H1 (cell line): ENCODE measurements at regions of chr19 and their contacts with region 1.

Region 1: DNA sequence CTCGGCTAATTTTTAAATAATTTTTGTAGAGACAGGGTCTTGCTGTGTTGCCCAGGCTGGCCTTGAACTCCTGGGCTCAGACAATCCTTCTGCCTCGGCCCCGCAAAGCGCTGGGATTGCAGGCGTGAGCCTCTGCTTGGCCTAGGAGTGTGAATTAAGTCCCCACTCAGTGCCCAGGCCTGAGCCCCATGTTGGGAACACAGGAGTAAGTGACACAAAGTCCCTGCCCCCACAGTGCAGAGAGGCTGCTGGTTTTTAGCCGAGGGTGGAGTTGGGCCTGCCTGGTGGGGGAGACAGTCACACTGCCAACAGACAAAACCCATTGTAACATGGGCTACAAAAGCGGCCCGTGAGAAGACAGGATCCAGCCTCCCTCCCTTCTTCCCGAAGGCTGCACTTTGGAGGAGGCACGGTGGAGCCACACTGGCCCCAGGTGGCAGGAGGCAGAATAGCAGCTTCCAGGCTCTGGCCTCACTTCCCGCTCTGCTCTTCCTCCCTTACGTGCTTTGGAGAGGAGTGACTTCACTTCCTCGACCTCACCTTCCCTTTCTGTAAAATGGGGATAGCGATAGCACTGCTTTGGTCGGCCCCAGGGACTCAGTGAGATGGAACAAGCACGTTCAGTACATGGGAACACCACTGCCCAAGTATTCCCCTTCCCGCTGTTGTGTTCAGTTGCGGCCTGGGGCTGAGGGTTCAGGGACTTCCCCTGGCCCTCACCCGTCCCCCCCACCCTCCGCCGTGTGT is 15.2 kb upstream of the EHD2 start:
- DNase-seq: peak; percentile 84 to 88
- H3K4me3 ChIP-seq: no peak overlapping the region
- H3K27ac ChIP-seq: no peak overlapping the region
- H3K4me1 ChIP-seq: peaks cover 0 to 3% (median 0%) of the 10 kb centered on the region in 4 experiments; a peak in 2 of 7 replicates
- H3K27me3 ChIP-seq: no peaks in the 10 kb centered on the region
- CTCF ChIP-seq: peak; percentile 95 to 100 (median 99)
- EP300 ChIP-seq: no peak
- POLR2A ChIP-seq: no peak
- RAD21 ChIP-seq: peak; percentile 99 to 100

Region 2: GRCh38 chr19:47428177-47428894 is 269.7 kb before region 1 on chr19:
- CTCF ChIA-PET with region 1: interaction called, 436 read pairs
- POLR2A ChIA-PET with region 1: interaction called, 3 read pairs
- DNase-seq: peak; percentile 96 to 100
- H3K4me3 ChIP-seq: peak overlapping the region; percentile 31 to 61 (median 42); a peak in 7 of 8 replicates
- H3K27ac ChIP-seq: no peak overlapping the region
- H3K4me1 ChIP-seq: peaks cover 0 to 23% (median 12%) of the 10 kb centered on the region in 4 experiments; a peak in 5 of 7 replicates
- H3K27me3 ChIP-seq: peaks cover 5 to 33% (median 29%) of the 10 kb centered on the region in 4 experiments
- CTCF ChIP-seq: no peak
- EP300 ChIP-seq: no peak
- POLR2A ChIP-seq: no peak
- RAD21 ChIP-seq: no peak

Region 3: DNA sequence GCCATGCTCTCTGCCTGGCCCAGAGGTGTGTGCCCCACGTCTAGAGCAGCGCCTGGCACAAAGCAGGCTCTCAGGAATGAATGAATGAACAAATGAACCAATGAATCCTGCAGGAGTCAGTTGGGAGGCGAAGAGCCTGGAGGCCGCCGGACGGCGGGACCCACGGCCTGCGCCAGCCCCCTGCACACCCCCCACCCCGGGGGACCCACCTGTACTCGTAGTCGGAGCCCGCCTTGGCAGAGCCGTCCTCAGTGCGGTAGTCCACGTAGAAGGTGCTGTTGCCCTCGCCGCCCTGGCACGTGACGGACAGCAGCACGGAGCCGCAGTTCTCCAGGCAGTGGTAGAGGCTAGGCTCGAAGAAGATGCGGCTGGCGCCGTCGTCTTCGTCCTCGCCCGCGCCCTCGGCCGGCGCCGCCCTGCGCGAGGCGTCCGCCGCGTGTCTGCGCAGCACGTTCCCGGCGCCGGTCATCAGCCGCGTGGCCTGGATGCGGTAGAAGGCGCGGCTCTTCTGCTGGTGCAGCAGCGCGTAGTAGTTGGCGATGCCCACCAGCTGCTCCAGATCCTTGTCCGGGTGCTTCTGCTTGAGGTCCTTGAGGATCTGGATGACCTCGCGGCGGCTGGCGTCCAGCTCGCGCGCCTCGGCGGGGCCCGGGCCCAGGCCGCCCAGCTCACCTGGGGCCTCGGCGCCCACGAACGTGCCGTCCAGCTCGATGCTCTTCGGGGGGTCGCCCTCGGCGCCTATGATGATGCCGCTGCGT is 241.1 kb before region 1 on chr19:
- CTCF ChIA-PET with region 1: interaction called, 10 read pairs
- POLR2A ChIA-PET with region 1: no interaction called
- DNase-seq: no peak
- H3K4me3 ChIP-seq: peak overlapping the region in 1 of 4 experiments; percentile 47; a peak in 2 of 8 replicates
- H3K27ac ChIP-seq: no peak overlapping the region
- H3K4me1 ChIP-seq: peaks cover 0 to 4% (median 0%) of the 10 kb centered on the region in 4 experiments; a peak in 2 of 7 replicates
- H3K27me3 ChIP-seq: peaks cover 0 to 17% (median 5%) of the 10 kb centered on the region in 4 experiments; a peak in 4 of 7 replicates
- CTCF ChIP-seq: no peak
- EP300 ChIP-seq: no peak
- POLR2A ChIP-seq: no peak
- RAD21 ChIP-seq: no peak

Region 4: DNA sequence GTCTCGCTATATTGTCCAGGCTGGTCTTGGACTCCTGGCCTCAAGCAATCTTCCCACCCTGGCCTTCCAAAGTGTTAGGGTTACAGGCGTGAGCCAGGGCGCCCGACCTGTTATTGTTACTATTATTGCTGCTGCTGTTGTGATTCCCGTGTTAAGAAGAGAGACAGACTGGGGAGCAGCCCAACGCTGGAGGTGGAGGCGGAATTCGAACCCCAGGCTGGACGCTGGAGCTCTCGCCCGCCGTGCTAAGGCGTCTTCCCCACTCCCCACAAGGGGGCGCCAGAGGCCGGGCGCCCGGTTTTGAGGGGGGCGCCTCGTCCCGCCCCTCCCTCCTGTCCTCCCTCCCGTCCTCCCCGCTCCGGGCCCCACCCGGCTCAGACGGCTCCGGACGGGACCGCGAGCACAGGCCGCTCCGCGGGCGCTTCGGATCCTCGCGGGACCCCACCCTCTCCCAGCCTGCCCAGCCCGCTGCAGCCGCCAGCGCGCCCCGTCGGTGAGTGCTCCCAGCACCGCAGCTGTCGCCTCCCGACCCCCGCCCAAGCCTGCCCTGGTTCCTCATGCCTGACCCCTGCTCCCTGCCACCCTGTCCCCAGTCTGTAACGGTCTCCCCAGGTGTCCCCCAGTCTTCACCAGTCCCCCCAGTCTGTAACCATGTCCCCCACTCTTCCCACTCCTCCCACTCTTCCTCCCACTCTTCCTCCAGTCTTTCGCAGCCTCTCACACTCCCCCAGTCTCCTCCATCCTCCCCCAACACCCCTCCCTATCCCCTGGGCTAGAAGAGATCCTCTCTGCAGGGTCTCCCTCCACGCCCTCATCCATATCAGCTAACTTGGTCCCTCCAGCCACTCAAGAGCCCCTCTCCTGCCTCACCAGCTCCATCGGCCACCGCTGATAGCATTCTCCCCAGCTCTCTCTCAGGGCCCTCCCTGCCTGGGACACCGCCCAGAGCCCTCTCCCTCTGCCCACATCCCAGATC is 15.3 kb after region 1 on chr19 and contains the start of gene EHD2:
- CTCF ChIA-PET with region 1: interaction called, 30 read pairs
- POLR2A ChIA-PET with region 1: no interaction called
- DNase-seq: peak in 1 of 2 experiments; percentile 89
- H3K4me3 ChIP-seq: peak within 1 kb of the TSS; percentile 47 to 66 (median 56)
- H3K27ac ChIP-seq: no peak within 1 kb of the TSS
- H3K4me1 ChIP-seq: no peaks in the 10 kb centered on the region
- H3K27me3 ChIP-seq: no peaks in the 10 kb centered on the region
- CTCF ChIP-seq: peak; percentile 74 to 84 (median 81)
- EP300 ChIP-seq: no peak
- POLR2A ChIP-seq: no peak
- RAD21 ChIP-seq: peak; percentile 77 to 81
- total RNA-seq, gene EHD2: 13.0 and 14.3 TPM in 2 replicates

Region 5: DNA sequence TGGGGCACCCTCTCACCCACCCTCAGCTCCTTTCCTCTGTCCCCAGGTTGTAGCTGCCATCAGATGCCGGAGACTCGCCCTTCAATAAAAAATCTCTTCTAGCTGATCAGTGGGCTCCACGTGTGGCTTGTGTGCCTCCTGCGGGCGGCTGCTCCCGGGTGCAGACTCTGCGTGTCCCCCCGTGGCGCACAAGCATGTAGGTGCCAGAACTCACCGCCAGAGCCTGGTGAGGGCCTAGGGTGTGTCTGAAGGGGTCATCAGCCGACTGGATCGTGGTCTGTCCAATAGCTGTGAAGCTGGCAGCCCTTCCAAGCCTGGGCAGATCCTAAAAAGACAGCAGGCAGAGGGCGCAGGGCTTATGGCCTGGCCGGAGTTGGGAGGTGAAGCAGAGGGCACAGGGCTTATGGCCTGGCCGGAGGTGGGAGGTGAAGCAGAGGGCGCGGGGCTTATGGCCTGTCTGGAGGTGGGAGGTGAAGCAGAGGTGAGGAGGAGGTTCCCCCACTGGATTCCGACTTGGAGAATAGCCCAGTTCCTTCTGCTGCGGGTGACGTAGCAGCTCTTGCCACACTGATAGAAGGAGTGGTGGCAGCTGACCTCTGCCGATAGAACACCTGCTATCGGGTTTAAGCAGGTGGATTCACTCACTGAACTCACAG is 59.0 kb after region 1 on chr19:
- CTCF ChIA-PET with region 1: interaction called, 11 read pairs
- POLR2A ChIA-PET with region 1: no interaction called
- DNase-seq: no peak
- H3K4me3 ChIP-seq: no peak overlapping the region
- H3K27ac ChIP-seq: no peak overlapping the region
- H3K4me1 ChIP-seq: no peaks in the 10 kb centered on the region
- H3K27me3 ChIP-seq: no peaks in the 10 kb centered on the region
- CTCF ChIP-seq: no peak
- EP300 ChIP-seq: no peak
- POLR2A ChIP-seq: peak in 1 of 2 experiments; percentile 37; a peak in 2 of 3 replicates
- RAD21 ChIP-seq: no peak